ENCODE measurements at regions of chr17 and their contacts with region 1.

Region 1: DNA sequence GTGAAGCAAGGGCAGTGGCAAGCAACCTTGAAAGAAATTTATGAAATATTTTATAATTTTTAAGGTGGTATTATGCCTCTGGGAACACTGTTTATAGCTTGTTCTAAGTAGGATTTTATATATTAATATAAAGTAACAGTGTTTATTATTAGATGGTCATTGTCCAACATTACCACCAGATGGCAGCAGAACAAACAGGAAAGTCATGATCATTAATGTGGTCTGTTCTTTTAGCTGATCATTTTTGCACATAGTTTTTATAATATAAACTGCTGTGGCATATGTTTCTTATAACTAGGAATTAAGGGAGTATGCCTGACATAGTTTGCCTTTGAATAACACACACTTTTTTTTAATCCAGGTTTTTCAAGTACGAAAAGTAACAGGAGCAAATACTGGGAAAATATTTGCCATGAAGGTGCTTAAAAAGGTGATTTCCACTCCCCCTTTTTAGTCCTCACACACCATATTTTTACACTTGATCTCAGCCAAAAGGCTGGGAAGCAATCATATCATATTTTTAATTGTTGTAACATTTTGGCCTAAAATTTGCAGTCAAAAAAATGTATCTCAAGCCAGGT is 21.4 kb downstream of the RPS6KB1 start:
- DNase-seq: no peak
- H3K4me3 ChIP-seq: no peak overlapping the region
- H3K27ac ChIP-seq: no peak overlapping the region
- H3K27me3 ChIP-seq: no peaks in the 10 kb centered on the region
- CTCF ChIP-seq: peak; percentile 59

Region 2: GRCh38 chr17:59753522-59754467 is 160.6 kb before region 1 on chr17:
- CTCF ChIA-PET with region 1: interaction called, 14 read pairs
- POLR2A ChIA-PET with region 1: no interaction called
- DNase-seq: peak; percentile 84
- H3K4me3 ChIP-seq: peak overlapping the region; percentile 27
- H3K27ac ChIP-seq: no peak overlapping the region
- H3K27me3 ChIP-seq: no peaks in the 10 kb centered on the region
- CTCF ChIP-seq: peak; percentile 67

Region 3: GRCh38 chr17:59763861-59764260 is 150.5 kb before region 1 on chr17:
- CTCF ChIA-PET with region 1: no interaction called
- POLR2A ChIA-PET with region 1: no interaction called
- DNase-seq: peak; percentile 81
- H3K4me3 ChIP-seq: no peak overlapping the region
- H3K27ac ChIP-seq: peak overlapping the region; percentile 96
- H3K27me3 ChIP-seq: no peaks in the 10 kb centered on the region
- CTCF ChIP-seq: no peak

Region 4: DNA sequence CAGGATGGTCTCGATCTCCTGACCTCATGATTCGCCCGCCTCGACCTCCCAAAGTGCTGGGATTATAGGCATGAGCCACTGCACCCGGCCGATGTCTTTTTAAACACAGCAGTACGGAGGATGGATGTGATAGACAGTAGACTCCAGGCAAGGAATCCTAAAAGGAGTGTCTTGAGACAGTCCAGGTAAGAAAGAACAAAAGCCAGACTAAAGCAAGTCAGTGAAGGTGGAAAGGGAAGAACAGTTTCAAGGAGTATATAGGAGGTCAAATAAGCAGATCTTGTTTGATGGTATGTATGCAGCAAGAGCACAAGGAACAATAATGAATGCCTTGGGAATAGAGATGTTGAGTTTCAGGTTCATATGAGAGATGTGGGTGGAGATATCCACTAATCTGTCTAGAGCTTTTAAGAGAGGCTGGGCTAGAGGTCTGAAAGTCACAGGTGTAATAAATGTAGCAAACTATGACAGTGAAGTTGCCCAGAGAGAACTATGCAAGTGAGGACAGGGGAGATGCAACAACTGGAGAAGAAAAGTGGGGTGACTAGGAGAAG is 26.1 kb before region 1 on chr17:
- CTCF ChIA-PET with region 1: interaction called, 14 read pairs
- POLR2A ChIA-PET with region 1: no interaction called
- DNase-seq: no peak
- H3K4me3 ChIP-seq: no peak overlapping the region
- H3K27ac ChIP-seq: no peak overlapping the region
- H3K27me3 ChIP-seq: no peaks in the 10 kb centered on the region
- CTCF ChIP-seq: no peak

Region 5: DNA sequence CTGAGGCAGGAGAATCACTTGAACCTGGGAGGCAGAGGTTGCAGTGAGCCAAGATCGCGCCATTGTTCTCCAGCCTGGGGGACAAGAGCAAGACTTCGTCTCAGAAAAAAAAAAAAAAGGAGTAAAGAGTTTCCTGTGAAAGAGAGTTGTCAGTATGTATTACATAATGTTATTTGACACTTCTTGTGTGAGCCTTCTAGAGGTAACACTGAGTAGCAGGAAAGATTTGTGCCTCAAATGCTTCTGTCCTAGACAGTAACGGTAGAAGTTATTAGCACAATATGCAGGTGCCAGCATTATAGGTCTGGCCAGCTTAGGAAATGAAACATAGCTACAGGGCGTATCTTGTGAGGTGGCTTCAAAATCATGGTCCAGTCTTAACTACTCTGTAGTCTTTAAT is 15.3 kb before region 1 on chr17:
- CTCF ChIA-PET with region 1: interaction called, 32 read pairs
- POLR2A ChIA-PET with region 1: no interaction called
- DNase-seq: no peak
- H3K4me3 ChIP-seq: no peak overlapping the region
- H3K27ac ChIP-seq: no peak overlapping the region
- H3K27me3 ChIP-seq: no peaks in the 10 kb centered on the region
- CTCF ChIP-seq: no peak

Region 6: GRCh38 chr17:59941131-59941530 is 26.8 kb after region 1 on chr17:
- CTCF ChIA-PET with region 1: interaction called, 24 read pairs
- POLR2A ChIA-PET with region 1: no interaction called
- DNase-seq: no peak
- H3K4me3 ChIP-seq: no peak overlapping the region
- H3K27ac ChIP-seq: no peak overlapping the region
- H3K27me3 ChIP-seq: no peaks in the 10 kb centered on the region
- CTCF ChIP-seq: no peak

Region 7: GRCh38 chr17:60036796-60037612 is 122.6 kb after region 1 on chr17:
- CTCF ChIA-PET with region 1: interaction called, 77 read pairs
- POLR2A ChIA-PET with region 1: no interaction called
- DNase-seq: peak; percentile 37
- H3K4me3 ChIP-seq: no peak overlapping the region
- H3K27ac ChIP-seq: peak overlapping the region; percentile 11
- H3K27me3 ChIP-seq: no peaks in the 10 kb centered on the region
- CTCF ChIP-seq: peak; percentile 97

Measured in AG04450 (cell line).